ENCODE measurements at regions of chr1 and their contacts with region 1.

Region 1: GRCh38 chr1:203038891-203039608 is 12.8 kb downstream of the PPFIA4 start:
- DNase-seq: peak; percentile 28 to 74 (median 66)
- ATAC-seq: peak; percentile 94
- H3K4me3 ChIP-seq: no peak overlapping the region
- H3K4me3 Mint-ChIP-seq: no peak overlapping the region
- H3K27ac ChIP-seq: no peak overlapping the region
- H3K27ac Mint-ChIP-seq: no peak overlapping the region
- H3K4me1 ChIP-seq: no peaks in the 10 kb centered on the region
- H3K4me1 Mint-ChIP-seq: peaks cover 2% of the 10 kb centered on the region
- H3K27me3 ChIP-seq: peaks cover 0 to 3% of the 10 kb centered on the region in 2 experiments
- H3K27me3 Mint-ChIP-seq: peaks cover 8% of the 10 kb centered on the region
- CTCF ChIP-seq: peak; percentile 86

Region 2: GRCh38 chr1:202807926-202808757 is 230.9 kb before region 1 on chr1 and contains the start of gene KDM5B:
- CTCF ChIA-PET with region 1: no interaction called
- POLR2A ChIA-PET with region 1: no interaction called
- intact Hi-C with region 1: no loop called
- DNase-seq: peak; percentile 10 to 77 (median 72)
- ATAC-seq: peak; percentile 63
- H3K4me3 ChIP-seq: peak within 1 kb of the TSS; percentile 65 to 77
- H3K4me3 Mint-ChIP-seq: peak within 1 kb of the TSS; percentile 86
- H3K27ac ChIP-seq: peak within 1 kb of the TSS in 1 of 2 experiments; percentile 56
- H3K27ac Mint-ChIP-seq: peak within 1 kb of the TSS; percentile 88
- H3K4me1 ChIP-seq: peaks cover 28% of the 10 kb centered on the region
- H3K4me1 Mint-ChIP-seq: peaks cover 48% of the 10 kb centered on the region
- H3K27me3 ChIP-seq: no peaks in the 10 kb centered on the region
- H3K27me3 Mint-ChIP-seq: no peaks in the 10 kb centered on the region
- CTCF ChIP-seq: no peak
- total RNA-seq, gene KDM5B: 55.0 to 65.1 TPM

Region 3: DNA sequence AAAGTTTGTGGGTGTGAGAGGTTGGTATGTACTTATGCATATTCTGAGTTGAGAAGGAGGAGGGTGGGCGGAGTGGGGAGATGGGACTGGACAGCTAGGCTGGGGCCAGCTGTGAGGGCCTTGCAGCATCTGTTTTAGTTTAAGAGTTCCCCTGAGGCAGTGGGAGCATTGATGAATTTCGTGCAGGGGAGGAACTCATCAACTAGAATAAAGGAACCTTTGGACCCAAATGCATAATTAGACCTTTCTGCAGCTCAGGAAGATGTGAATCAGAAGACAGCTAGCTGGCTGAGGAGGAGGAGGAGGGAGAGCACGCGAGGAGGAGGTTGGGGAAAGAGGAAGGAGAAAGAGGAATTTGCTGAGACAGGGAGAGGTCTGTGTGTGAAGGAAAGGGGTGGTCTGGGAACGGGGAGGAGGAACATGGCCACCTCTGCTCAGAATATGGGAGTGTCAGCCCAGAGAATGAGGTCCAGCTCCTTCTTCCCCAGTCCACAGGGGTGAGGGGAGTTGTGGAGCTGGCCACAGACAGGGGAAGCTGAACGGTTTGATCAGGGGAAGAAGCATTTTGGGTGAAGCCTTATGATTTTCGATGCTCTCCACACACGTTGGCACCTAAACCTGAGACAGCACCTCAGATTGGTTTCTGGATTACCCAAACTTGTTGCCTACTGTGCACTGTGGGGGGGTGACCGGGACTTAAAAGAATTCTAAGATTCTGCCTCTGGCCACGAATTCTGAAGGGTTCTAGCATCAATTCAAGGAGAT is 19.0 kb after region 1 on chr1:
- CTCF ChIA-PET with region 1: interaction called, 13 read pairs
- POLR2A ChIA-PET with region 1: no interaction called
- intact Hi-C with region 1: no loop called
- DNase-seq: no peak
- ATAC-seq: no peak
- H3K4me3 ChIP-seq: no peak overlapping the region
- H3K4me3 Mint-ChIP-seq: no peak overlapping the region
- H3K27ac ChIP-seq: no peak overlapping the region
- H3K27ac Mint-ChIP-seq: no peak overlapping the region
- H3K4me1 ChIP-seq: no peaks in the 10 kb centered on the region
- H3K4me1 Mint-ChIP-seq: no peaks in the 10 kb centered on the region
- H3K27me3 ChIP-seq: no peaks in the 10 kb centered on the region
- H3K27me3 Mint-ChIP-seq: no peaks in the 10 kb centered on the region
- CTCF ChIP-seq: no peak

Region 4: GRCh38 chr1:203172128-203173010 is 133.3 kb after region 1 on chr1:
- CTCF ChIA-PET with region 1: interaction called, 46 read pairs
- POLR2A ChIA-PET with region 1: no interaction called
- intact Hi-C with region 1: loop called in 1 of 2 experiments (anchors 2 kb)
- DNase-seq: peak in 6 of 9 experiments; percentile 13 to 54 (median 44)
- ATAC-seq: no peak
- H3K4me3 ChIP-seq: no peak overlapping the region
- H3K4me3 Mint-ChIP-seq: no peak overlapping the region
- H3K27ac ChIP-seq: no peak overlapping the region
- H3K27ac Mint-ChIP-seq: no peak overlapping the region
- H3K4me1 ChIP-seq: no peaks in the 10 kb centered on the region
- H3K4me1 Mint-ChIP-seq: no peaks in the 10 kb centered on the region
- H3K27me3 ChIP-seq: no peaks in the 10 kb centered on the region
- H3K27me3 Mint-ChIP-seq: no peaks in the 10 kb centered on the region
- CTCF ChIP-seq: peak; percentile 60

Region 5: GRCh38 chr1:203216274-203217138 is 177.5 kb after region 1 on chr1:
- CTCF ChIA-PET with region 1: interaction called, 168 read pairs
- POLR2A ChIA-PET with region 1: interaction called, 3 read pairs
- intact Hi-C with region 1: loop called (anchors 1 kb)
- DNase-seq: peak; percentile 9 to 72 (median 55)
- ATAC-seq: peak; percentile 58
- H3K4me3 ChIP-seq: no peak overlapping the region
- H3K4me3 Mint-ChIP-seq: no peak overlapping the region
- H3K27ac ChIP-seq: no peak overlapping the region
- H3K27ac Mint-ChIP-seq: no peak overlapping the region
- H3K4me1 ChIP-seq: no peaks in the 10 kb centered on the region
- H3K4me1 Mint-ChIP-seq: no peaks in the 10 kb centered on the region
- H3K27me3 ChIP-seq: peaks cover 0 to 3% of the 10 kb centered on the region in 2 experiments
- H3K27me3 Mint-ChIP-seq: peaks cover 20% of the 10 kb centered on the region
- CTCF ChIP-seq: peak; percentile 71

Region 6: GRCh38 chr1:203326830-203327683 is 288.0 kb after region 1 on chr1:
- CTCF ChIA-PET with region 1: interaction called, 3 read pairs
- POLR2A ChIA-PET with region 1: no interaction called
- intact Hi-C with region 1: loop called in 1 of 2 experiments (anchors 5 kb)
- DNase-seq: peak; percentile 86 to 97 (median 94)
- ATAC-seq: peak; percentile 67
- H3K4me3 ChIP-seq: peak overlapping the region; percentile 58 to 60
- H3K4me3 Mint-ChIP-seq: peak overlapping the region; percentile 74
- H3K27ac ChIP-seq: peak overlapping the region; percentile 92 to 97
- H3K27ac Mint-ChIP-seq: peak overlapping the region; percentile 93
- H3K4me1 ChIP-seq: peaks cover 65% of the 10 kb centered on the region
- H3K4me1 Mint-ChIP-seq: peaks cover 65% of the 10 kb centered on the region
- H3K27me3 ChIP-seq: no peaks in the 10 kb centered on the region
- H3K27me3 Mint-ChIP-seq: no peaks in the 10 kb centered on the region
- CTCF ChIP-seq: no peak

Region 7: GRCh38 chr1:203486618-203487370 is 447.7 kb after region 1 on chr1:
- CTCF ChIA-PET with region 1: no interaction called
- POLR2A ChIA-PET with region 1: no interaction called
- intact Hi-C with region 1: loop called in 1 of 2 experiments (anchors 5 kb)
- DNase-seq: peak in 1 of 9 experiments; percentile 15
- ATAC-seq: no peak
- H3K4me3 ChIP-seq: peak overlapping the region in 1 of 2 experiments; percentile 65
- H3K4me3 Mint-ChIP-seq: peak overlapping the region; percentile 82
- H3K27ac ChIP-seq: peak overlapping the region in 1 of 2 experiments; percentile 6
- H3K27ac Mint-ChIP-seq: no peak overlapping the region
- H3K4me1 ChIP-seq: peaks cover 13% of the 10 kb centered on the region
- H3K4me1 Mint-ChIP-seq: peaks cover 10% of the 10 kb centered on the region
- H3K27me3 ChIP-seq: no peaks in the 10 kb centered on the region
- H3K27me3 Mint-ChIP-seq: no peaks in the 10 kb centered on the region
- CTCF ChIP-seq: no peak

Measured in CD8-positive, alpha-beta T cell (primary cell).